Calu3 (cell line): ENCODE measurements at regions of chr15 and their contacts with region 1.

Region 1: DNA sequence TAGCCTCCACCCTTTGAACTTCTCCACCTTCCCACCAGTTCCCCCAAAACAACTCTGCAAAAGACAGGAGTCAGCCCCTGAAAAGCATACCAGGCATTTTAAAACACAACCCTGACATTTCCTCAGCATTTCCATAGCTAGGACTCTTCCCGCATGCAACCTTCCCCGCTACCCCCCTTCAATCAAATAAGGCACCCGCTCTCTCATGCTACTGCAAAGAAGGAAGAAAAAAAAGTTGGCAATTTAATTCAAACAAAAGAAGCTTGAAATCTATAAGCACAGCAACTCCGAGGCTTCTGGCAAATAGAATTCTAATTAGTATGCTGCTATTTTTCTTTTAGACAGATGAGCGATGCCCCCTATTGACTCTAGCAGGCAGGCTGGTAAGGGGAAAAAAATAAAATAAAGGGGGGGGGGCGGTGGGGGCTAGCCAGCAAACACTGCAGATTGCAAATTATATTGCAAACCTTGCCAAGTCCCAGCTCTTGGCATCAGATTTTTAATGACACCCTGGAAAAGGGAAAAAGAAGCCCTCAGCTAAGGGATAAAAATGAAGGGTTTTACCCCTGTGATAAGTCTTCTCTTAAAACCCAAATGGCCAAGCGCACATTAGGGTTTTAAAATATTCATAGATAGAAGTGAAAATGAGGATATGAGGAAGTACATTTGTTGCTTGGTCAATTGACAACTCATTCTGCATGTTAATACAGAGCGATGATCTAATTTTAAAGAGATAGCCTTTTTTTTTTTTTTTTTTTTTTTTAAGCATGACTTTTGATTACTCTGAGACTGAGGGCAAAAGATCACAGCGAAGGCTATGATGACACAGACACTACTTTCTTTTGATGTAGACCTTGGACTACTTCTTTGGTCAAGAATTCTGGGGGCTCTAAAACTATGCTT is 255.2 kb downstream of the NR2F2 start:
- DNase-seq: no peak
- H3K4me3 Mint-ChIP-seq: no peak overlapping the region
- H3K27ac Mint-ChIP-seq: no peak overlapping the region
- H3K4me1 Mint-ChIP-seq: peaks cover 9% of the 10 kb centered on the region
- H3K27me3 Mint-ChIP-seq: no peaks in the 10 kb centered on the region
- CTCF ChIP-seq: peak; percentile 44

Region 2: DNA sequence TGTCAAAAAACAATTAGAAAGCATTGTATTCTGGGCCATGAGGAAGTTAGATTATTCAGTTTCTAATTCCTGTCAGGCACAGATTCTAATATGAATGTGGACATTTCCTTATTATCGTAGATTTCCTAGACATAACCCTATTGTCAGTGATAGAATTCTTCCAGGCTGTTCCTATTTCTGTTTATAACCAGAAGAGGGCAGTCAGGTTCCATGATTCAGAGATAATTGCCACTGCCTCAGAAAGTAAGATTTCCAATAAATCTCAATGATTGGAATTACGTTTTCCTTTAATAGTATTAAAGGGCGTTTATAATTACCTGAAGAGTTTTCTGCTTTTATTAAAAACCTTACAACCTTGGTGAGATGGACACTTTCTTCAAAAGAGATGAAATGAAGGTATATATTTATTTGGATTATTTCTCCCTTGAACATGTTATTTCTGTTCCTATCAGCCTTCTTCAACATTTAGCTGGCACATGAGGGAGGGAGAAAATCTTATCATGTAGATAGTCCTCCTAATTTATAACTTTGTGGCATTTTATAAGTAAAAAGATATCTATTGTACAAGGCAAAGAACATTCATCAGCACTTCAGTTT is 1915.2 kb before region 1 on chr15:
- CTCF ChIA-PET with region 1: no interaction called
- intact Hi-C with region 1: loop called (anchors 5 kb)
- DNase-seq: no peak
- H3K4me3 Mint-ChIP-seq: no peak overlapping the region
- H3K27ac Mint-ChIP-seq: no peak overlapping the region
- H3K4me1 Mint-ChIP-seq: no peaks in the 10 kb centered on the region
- H3K27me3 Mint-ChIP-seq: peaks cover 17% of the 10 kb centered on the region
- CTCF ChIP-seq: peak; percentile 64

Region 3: GRCh38 chr15:95259513-95259912 is 1326.2 kb before region 1 on chr15:
- CTCF ChIA-PET with region 1: no interaction called
- intact Hi-C with region 1: loop called (anchors 2 kb)
- DNase-seq: peak; percentile 78
- H3K4me3 Mint-ChIP-seq: peak overlapping the region; percentile 15
- H3K27ac Mint-ChIP-seq: no peak overlapping the region
- H3K4me1 Mint-ChIP-seq: peaks cover 26% of the 10 kb centered on the region
- H3K27me3 Mint-ChIP-seq: no peaks in the 10 kb centered on the region
- CTCF ChIP-seq: peak; percentile 85

Region 4: GRCh38 chr15:96416934-96417759 is 168.6 kb before region 1 on chr15:
- CTCF ChIA-PET with region 1: interaction called, 3 read pairs
- intact Hi-C with region 1: loop called (anchors 5 kb)
- DNase-seq: peak; percentile 53
- H3K4me3 Mint-ChIP-seq: peak overlapping the region; percentile 70
- H3K27ac Mint-ChIP-seq: peak overlapping the region; percentile 78
- H3K4me1 Mint-ChIP-seq: peaks cover 68% of the 10 kb centered on the region
- H3K27me3 Mint-ChIP-seq: no peaks in the 10 kb centered on the region
- CTCF ChIP-seq: no peak

Region 5: DNA sequence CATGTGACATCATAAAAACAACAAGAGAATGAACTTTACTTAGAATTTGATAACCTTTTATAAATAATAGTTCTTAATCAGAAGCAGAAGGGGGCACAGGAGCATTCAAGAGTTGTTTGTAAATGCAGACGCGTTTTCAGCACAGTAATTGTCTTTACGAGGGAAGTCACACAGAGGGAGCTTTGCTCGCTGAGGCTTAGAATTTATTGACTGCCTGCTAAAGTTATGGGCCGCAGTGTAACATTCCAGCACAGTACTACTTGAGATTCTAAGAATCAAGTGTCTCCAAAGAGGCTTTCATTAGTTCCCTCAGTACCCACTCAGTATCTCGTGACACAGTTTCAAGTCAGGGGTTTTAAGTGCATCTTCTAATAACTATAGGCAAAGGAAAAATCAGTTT is 33.4 kb after region 1 on chr15:
- CTCF ChIA-PET with region 1: no interaction called
- intact Hi-C with region 1: no loop called
- DNase-seq: no peak
- H3K4me3 Mint-ChIP-seq: no peak overlapping the region
- H3K27ac Mint-ChIP-seq: no peak overlapping the region
- H3K4me1 Mint-ChIP-seq: no peaks in the 10 kb centered on the region
- H3K27me3 Mint-ChIP-seq: no peaks in the 10 kb centered on the region
- CTCF ChIP-seq: no peak

Region 6: GRCh38 chr15:97759363-97759762 is 1173.6 kb after region 1 on chr15:
- CTCF ChIA-PET with region 1: no interaction called
- intact Hi-C with region 1: loop called (anchors 5 kb)
- DNase-seq: no peak
- H3K4me3 Mint-ChIP-seq: no peak overlapping the region
- H3K27ac Mint-ChIP-seq: no peak overlapping the region
- H3K4me1 Mint-ChIP-seq: peaks cover 8% of the 10 kb centered on the region
- H3K27me3 Mint-ChIP-seq: no peaks in the 10 kb centered on the region
- CTCF ChIP-seq: no peak